WTC11 (cell line): ENCODE measurements at regions of chr5 and their contacts with region 1.

Region 1: GRCh38 chr5:126776497-126777256 is at the start of gene LMNB1:
- DNase-seq: peak; percentile 97
- ATAC-seq: peak; percentile 87
- H3K4me3 Mint-ChIP-seq: peak within 1 kb of the TSS; percentile 93
- H3K27ac Mint-ChIP-seq: peak within 1 kb of the TSS; percentile 99
- H3K4me1 Mint-ChIP-seq: peaks cover 29% of the 10 kb centered on the region
- H3K27me3 Mint-ChIP-seq: no peaks in the 10 kb centered on the region
- CTCF ChIP-seq: no peak
- total RNA-seq, gene LMNB1: 220 to 233 TPM (median 223 TPM) in 3 replicates

Region 2: DNA sequence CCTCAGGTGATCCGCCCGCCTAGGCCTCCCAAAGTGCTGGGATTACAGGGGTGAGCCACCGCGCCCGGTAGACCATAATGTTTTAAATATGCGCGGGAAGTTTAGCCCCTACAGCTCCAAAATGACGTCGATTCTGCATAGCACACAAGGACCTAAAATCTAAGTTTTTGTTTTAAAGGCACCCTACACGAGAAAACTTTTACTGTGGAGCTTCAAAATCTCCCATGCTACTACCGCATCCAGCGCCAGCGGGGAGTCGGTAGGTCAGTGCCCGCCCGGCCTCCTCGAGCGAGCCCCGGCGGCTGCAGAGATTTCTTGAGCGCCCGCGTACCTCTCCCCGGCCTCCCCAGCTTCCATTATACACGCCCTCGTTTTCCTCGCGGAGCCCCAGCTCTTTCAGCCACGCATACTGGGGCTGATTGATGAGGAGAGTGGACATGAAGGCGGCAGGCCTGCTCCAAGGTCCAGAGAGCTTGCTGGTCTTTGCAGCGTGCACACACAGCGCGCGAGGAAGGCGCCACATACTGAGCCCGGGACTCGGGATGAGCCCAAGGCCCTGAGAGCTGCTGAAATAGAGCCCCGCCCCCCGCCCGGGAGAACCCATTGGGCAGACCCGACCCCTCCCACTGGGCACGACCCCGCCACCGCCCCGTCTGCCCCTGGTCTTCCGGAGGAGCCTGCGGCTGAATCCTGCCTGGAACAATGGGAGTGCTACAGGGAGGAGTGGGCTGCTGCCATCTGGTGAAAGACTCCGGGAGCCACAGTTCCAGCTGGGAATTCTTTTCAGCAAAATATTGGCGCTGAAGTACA is 181.8 kb before region 1 on chr5 and contains the start of gene ALDH7A1:
- CTCF ChIA-PET with region 1: interaction called, 3 read pairs
- POLR2A ChIA-PET with region 1: interaction called, 17 read pairs
- DNase-seq: peak; percentile 98
- ATAC-seq: peak; percentile 88
- H3K4me3 Mint-ChIP-seq: peak within 1 kb of the TSS; percentile 91
- H3K27ac Mint-ChIP-seq: peak within 1 kb of the TSS; percentile 98
- H3K4me1 Mint-ChIP-seq: peaks cover 47% of the 10 kb centered on the region
- H3K27me3 Mint-ChIP-seq: no peaks in the 10 kb centered on the region
- CTCF ChIP-seq: no peak
- total RNA-seq, gene ALDH7A1: 176 to 178 TPM (median 177 TPM) in 3 replicates

Region 3: GRCh38 chr5:126656396-126657007 is 120.2 kb before region 1 on chr5:
- CTCF ChIA-PET with region 1: interaction called, 14 read pairs
- POLR2A ChIA-PET with region 1: interaction called, 10 read pairs
- DNase-seq: no peak
- ATAC-seq: no peak
- H3K4me3 Mint-ChIP-seq: no peak overlapping the region
- H3K27ac Mint-ChIP-seq: no peak overlapping the region; the same call in 1 of the 2 replicates
- H3K4me1 Mint-ChIP-seq: peaks cover 10% of the 10 kb centered on the region
- H3K27me3 Mint-ChIP-seq: no peaks in the 10 kb centered on the region
- CTCF ChIP-seq: peak; percentile 67

Region 4: DNA sequence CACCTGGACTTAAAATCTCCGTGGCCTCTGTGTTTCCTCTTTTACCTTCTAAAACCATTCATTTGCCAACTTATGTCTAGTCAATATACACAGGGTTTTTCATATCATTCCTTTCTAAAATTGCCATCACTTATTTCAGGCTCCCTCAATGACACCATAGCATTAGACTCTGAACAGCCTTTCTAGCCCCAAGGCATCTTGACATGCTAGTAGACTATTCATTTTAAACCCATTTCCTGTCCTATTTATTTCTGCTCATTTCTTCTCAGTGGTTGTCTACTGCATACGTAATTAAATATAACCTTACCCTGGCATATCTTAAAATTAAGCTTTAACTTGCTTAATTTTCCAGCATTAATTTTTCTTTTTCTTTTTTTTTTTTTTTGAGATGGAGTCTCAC is 92.8 kb before region 1 on chr5:
- CTCF ChIA-PET with region 1: interaction called, 32 read pairs
- POLR2A ChIA-PET with region 1: interaction called, 62 read pairs
- DNase-seq: no peak
- ATAC-seq: no peak
- H3K4me3 Mint-ChIP-seq: no peak overlapping the region
- H3K27ac Mint-ChIP-seq: no peak overlapping the region
- H3K4me1 Mint-ChIP-seq: peaks cover 51% of the 10 kb centered on the region
- H3K27me3 Mint-ChIP-seq: no peaks in the 10 kb centered on the region
- CTCF ChIP-seq: no peak

Region 5: DNA sequence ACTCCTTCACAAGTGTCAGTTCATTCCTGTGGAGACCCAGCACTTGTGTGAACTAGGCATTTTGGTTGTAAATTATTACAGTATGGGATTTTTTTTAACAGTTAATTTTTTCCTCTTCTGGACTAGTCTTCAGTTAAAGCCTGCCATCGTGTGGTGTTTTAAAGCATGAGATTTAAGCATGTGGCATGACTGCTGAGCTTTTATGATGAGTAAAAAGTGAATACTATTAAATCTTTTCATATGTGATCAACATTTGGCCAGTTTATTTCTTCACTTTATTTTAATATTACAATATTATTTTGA is 25.3 kb after region 1 on chr5:
- CTCF ChIA-PET with region 1: interaction called, 8 read pairs
- POLR2A ChIA-PET with region 1: interaction called, 11 read pairs
- DNase-seq: no peak
- ATAC-seq: no peak
- H3K4me3 Mint-ChIP-seq: no peak overlapping the region
- H3K27ac Mint-ChIP-seq: peak overlapping the region; percentile 45
- H3K4me1 Mint-ChIP-seq: peaks cover 15% of the 10 kb centered on the region
- H3K27me3 Mint-ChIP-seq: no peaks in the 10 kb centered on the region
- CTCF ChIP-seq: no peak

Region 6: DNA sequence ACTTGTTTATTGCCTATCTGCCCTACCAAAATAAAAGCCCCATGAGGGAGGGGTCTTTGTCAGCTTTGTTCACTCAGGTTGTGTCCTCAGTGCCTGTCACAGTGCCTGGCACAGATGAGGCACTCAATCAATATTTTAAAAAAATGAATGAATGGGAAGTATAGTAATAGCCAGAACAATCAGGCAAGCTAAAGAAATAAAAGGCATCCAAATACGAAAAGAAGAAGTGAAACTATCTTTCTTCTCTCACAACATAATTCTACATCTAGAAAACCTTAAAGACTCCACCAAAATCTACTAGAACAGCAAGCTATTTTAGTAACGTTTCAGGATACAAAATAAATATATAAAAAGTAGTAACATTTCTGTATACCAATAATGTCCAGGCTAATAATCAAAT is 334.4 kb after region 1 on chr5:
- CTCF ChIA-PET with region 1: no interaction called
- POLR2A ChIA-PET with region 1: no interaction called
- DNase-seq: no peak
- ATAC-seq: no peak
- H3K4me3 Mint-ChIP-seq: no peak overlapping the region
- H3K27ac Mint-ChIP-seq: no peak overlapping the region
- H3K4me1 Mint-ChIP-seq: peaks cover 5% of the 10 kb centered on the region
- H3K27me3 Mint-ChIP-seq: peaks cover 9% of the 10 kb centered on the region
- CTCF ChIP-seq: no peak